Breast epithelium (tissue), 4 donors: ENCODE measurements at regions of chr22 and their contacts with region 1.

Region 1: DNA sequence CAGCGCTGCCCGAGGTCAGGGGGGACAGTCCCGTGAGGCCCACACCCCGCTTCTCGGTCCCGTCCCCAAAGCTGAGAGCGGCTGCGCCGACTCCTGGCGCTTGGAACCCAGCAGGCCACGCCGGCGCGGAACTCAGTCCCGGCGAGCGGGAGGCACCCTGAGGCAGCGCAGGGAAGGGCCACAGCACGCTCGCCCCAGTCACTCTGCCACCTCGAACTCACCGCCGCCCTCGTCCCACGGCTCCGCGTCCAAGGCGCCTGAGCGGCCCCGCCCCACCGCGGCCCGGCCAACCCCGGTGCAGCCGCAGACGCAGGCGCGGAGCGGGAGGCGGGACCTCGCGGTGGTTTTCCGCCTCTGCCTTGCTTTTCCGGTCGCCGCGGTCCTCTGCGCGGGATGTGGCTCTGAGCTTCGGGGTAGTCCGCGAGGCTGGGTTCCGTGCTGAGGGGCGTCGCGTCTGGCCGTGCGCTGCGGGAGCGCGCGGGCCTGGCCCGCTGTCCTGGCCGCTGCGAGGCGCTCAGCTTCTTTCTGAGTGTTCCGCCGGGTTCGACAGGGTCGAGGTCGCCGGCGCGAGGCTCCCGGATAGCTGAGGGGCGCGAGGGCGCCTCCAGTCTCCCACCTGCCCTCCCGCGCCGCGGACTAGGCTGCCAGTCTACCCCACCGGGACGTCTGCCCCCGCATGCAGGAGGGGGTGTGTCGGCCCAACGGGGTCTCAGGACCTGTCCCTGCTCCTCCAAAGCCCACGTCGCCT is at the start of gene CDPF1:
- DNase-seq: peak; percentile 80 to 91
- H3K4me3 ChIP-seq: peak within 1 kb of the TSS; percentile 81 to 88 (median 82)
- H3K27ac ChIP-seq: peak within 1 kb of the TSS; percentile 83 to 86
- H3K4me1 ChIP-seq: peaks cover 0 to 5% of the 10 kb centered on the region in 2 donors
- H3K27me3 ChIP-seq: no peaks in the 10 kb centered on the region
- CTCF ChIP-seq: no peak
- POLR2A ChIP-seq: peak; percentile 52
- total RNA-seq, gene CDPF1: 7.5 to 16.6 (median 13.3) TPM

Region 2: GRCh38 chr22:46162771-46163556 is 87.2 kb before region 1 on chr22:
- intact Hi-C with region 1: loop called (anchors 1 kb)
- DNase-seq: no peak
- H3K4me3 ChIP-seq: no peak overlapping the region
- H3K27ac ChIP-seq: no peak overlapping the region
- H3K4me1 ChIP-seq: no peaks in the 10 kb centered on the region
- H3K27me3 ChIP-seq: no peaks in the 10 kb centered on the region
- CTCF ChIP-seq: no peak
- POLR2A ChIP-seq: no peak

Region 3: DNA sequence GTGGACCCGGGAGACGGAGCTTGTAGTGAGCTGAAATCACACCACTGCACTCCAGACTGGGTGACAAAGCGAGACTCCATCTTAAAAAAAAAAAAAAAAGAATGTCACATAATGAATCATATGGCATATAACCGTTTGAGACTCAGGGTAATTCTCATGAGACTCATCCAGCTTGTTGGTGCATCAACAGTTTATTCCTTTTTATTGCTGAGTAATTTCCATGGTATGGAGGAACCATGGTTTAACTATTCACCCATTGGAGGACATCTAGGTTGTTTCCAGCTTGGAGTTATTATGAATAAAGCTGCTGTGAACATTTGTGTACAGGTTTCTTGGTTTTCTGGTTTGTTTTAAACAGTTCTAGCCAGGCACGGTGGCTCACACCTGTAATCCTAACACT is 74.6 kb before region 1 on chr22:
- intact Hi-C with region 1: no loop called
- DNase-seq: no peak
- H3K4me3 ChIP-seq: no peak overlapping the region
- H3K27ac ChIP-seq: no peak overlapping the region
- H3K4me1 ChIP-seq: no peaks in the 10 kb centered on the region
- H3K27me3 ChIP-seq: no peaks in the 10 kb centered on the region
- CTCF ChIP-seq: no peak
- POLR2A ChIP-seq: no peak